OCI-LY7 (cell line): ENCODE measurements at regions of chr11 and their contacts with region 1.

Region 1: GRCh38 chr11:111886844-111887243 is 7.5 kb downstream of the CFAP68 start:
- DNase-seq: no peak
- H3K4me3 ChIP-seq: no peak overlapping the region
- H3K27ac ChIP-seq: no peak overlapping the region
- H3K4me1 ChIP-seq: no peaks in the 10 kb centered on the region
- CTCF ChIP-seq: no peak

Region 2: DNA sequence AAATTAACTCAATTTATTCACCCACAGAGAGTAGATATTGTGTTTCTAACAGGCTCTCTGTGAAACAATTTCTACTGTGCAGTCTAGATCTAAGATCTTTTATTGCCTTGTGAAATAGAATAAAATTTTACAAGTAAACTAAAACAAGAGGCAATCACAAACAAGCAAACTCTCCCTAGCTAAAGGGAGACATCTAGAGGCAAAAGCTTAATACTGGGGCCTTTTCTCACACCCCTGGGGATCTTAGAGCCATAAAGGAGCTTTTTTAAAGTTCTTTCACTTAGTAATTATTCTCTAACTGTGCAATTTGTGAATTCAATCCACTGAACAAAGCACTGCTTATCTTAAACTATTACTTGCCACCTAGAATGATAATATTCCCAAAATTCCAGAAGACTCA is 35.2 kb before region 1 on chr11:
- CTCF ChIA-PET with region 1: no interaction called
- POLR2A ChIA-PET with region 1: interaction called, 11 read pairs
- intact Hi-C with region 1: no loop called
- DNase-seq: peak; percentile 15
- H3K4me3 ChIP-seq: no peak overlapping the region
- H3K27ac ChIP-seq: no peak overlapping the region
- H3K4me1 ChIP-seq: no peaks in the 10 kb centered on the region
- CTCF ChIP-seq: peak; percentile 74

Region 3: DNA sequence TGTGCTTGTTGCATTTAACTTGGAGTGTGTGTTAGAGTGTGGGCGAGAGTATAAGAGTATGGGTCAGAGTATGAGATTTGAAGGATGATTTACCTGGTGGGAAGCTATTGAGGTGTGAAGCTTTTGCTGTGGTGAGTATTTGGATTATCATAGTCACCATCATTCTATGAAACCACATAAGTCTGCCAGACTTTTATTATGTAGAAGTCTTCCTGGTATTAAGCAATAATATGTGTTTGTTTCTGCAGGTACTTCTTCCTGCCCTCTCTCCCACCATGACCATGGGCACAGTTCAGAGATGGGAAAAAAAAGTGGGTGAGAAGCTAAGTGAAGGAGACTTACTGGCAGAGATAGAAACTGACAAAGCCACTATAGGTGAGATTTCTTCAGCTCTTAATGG is 146.3 kb after region 1 on chr11:
- CTCF ChIA-PET with region 1: no interaction called
- POLR2A ChIA-PET with region 1: no interaction called
- intact Hi-C with region 1: no loop called
- DNase-seq: no peak
- H3K4me3 ChIP-seq: no peak overlapping the region
- H3K27ac ChIP-seq: no peak overlapping the region
- H3K4me1 ChIP-seq: no peaks in the 10 kb centered on the region
- CTCF ChIP-seq: no peak

Region 4: GRCh38 chr11:112062923-112063322 is 176.1 kb after region 1 on chr11:
- CTCF ChIA-PET with region 1: no interaction called
- POLR2A ChIA-PET with region 1: no interaction called
- intact Hi-C with region 1: no loop called
- DNase-seq: no peak
- H3K4me3 ChIP-seq: no peak overlapping the region
- H3K27ac ChIP-seq: no peak overlapping the region
- H3K4me1 ChIP-seq: no peaks in the 10 kb centered on the region
- CTCF ChIP-seq: no peak

Region 5: GRCh38 chr11:112219476-112220232 is 332.8 kb after region 1 on chr11:
- CTCF ChIA-PET with region 1: no interaction called
- POLR2A ChIA-PET with region 1: no interaction called
- intact Hi-C with region 1: no loop called
- DNase-seq: peak; percentile 79
- H3K4me3 ChIP-seq: no peak overlapping the region
- H3K27ac ChIP-seq: no peak overlapping the region
- H3K4me1 ChIP-seq: no peaks in the 10 kb centered on the region
- CTCF ChIP-seq: peak; percentile 88